Naive thymus-derived CD4-positive, alpha-beta T cell (primary cell): ENCODE measurements at regions of chr14 and their contacts with region 1.

Region 1: DNA sequence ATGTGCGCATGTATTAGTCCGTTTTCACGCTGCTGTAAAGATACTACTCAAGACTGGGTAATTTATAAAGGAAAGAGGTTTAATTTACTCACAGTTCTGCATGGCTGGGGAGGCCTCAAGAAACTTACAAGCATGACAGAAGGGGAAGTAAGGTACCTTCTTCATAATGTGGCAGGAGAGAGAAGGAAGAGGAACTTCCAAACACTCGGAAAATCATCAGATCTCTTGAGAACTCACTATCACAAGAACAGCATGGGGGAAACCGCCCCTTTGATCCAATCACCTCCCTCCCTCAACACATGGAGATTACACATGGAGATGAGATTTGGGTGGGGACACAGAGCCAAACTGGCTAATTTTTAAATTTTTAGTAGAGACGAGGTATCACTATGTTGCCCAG is 41.8 kb upstream of the SNX6 start:
- DNase-seq: no peak
- ATAC-seq: no peak
- H3K4me3 ChIP-seq: no peak overlapping the region
- H3K4me3 Mint-ChIP-seq: no peak overlapping the region
- H3K27ac ChIP-seq: no peak overlapping the region
- H3K27ac Mint-ChIP-seq: no peak overlapping the region
- H3K4me1 ChIP-seq: no peaks in the 10 kb centered on the region
- H3K4me1 Mint-ChIP-seq: peaks cover 0 to 1% (median 0%) of the 10 kb centered on the region in 7 donors
- H3K27me3 ChIP-seq: no peaks in the 10 kb centered on the region
- H3K27me3 Mint-ChIP-seq: peaks cover 0 to 2% (median 0%) of the 10 kb centered on the region in 5 donors

Region 2: DNA sequence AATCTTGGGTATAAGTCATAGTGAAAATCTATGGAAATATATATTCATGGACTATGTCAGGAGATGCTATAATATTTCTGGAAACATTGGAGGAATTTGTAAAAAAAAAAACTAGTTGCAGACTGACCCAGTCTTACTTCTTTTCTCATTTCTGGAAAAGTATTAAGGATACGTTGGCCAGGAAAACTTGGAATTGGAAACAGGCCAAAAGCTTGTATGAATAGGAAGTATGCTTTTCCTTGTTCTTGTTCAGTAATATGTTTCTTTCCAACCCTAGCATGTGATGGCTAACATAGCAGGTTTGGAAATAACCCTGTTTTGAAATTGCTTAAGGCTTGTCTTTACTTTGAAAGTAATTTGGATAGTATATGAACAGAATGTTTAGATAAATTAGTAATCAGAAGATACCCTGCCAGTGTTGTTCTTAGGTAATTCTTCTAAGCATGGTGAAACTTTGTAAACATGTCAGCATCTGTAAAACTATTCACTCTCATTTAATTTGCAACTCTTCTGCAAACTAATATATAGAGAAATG is 1416.8 kb before region 1 on chr14:
- CTCF ChIA-PET with region 1: no interaction called
- POLR2A ChIA-PET with region 1: no interaction called
- intact Hi-C with region 1: no loop called
- DNase-seq: no peak
- ATAC-seq: no peak
- H3K4me3 ChIP-seq: no peak overlapping the region
- H3K4me3 Mint-ChIP-seq: no peak overlapping the region
- H3K27ac ChIP-seq: no peak overlapping the region
- H3K27ac Mint-ChIP-seq: no peak overlapping the region
- H3K4me1 ChIP-seq: no peaks in the 10 kb centered on the region
- H3K4me1 Mint-ChIP-seq: no peaks in the 10 kb centered on the region
- H3K27me3 ChIP-seq: no peaks in the 10 kb centered on the region
- H3K27me3 Mint-ChIP-seq: peaks cover 0 to 6% (median 0%) of the 10 kb centered on the region in 5 donors

Region 3: DNA sequence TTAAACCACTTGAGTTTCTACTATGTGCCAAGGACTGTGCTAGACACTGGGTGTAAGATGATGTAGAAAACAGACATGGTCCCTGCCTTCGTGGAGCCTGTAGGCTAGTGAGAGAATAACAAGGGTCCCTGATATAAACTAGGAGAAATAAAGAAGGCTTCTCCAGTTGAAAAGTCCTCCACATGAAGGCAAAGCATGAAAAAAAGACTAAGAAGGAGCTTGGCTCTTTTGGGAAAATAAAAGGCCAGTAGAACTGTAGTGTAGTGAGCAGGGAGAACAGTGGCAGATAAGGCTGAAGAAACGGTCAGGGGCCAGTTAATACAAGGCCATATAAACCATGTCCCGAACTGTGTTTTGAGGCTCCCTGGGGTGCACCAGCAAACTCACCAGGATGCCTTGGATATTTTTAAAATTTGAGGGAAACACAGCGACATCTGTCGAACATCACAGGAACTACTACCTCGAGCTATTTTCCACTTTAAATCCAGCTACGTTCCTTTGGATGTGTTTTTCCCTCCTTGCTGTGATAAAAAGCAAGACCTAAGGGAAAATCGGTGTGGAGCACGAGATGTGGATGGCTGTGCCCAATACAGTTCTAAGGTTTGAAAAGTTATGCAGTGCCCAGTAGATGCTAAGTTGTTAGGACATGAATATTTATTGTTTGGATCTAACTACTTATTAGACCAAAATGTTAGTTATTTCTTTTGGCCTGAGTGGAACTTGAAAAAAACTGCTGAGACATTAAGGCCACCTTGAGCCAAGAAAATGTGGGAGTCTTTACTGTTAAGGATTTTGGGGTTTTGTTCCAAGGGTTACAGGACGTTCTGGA is 51.2 kb after region 1 on chr14:
- CTCF ChIA-PET with region 1: interaction called, 42 read pairs
- POLR2A ChIA-PET with region 1: interaction called, 4 read pairs
- intact Hi-C with region 1: loop called (anchors 1 kb)
- DNase-seq: peak in 6 of 9 donors; percentile 21 to 54 (median 32)
- ATAC-seq: peak; percentile 66
- H3K4me3 ChIP-seq: no peak overlapping the region
- H3K4me3 Mint-ChIP-seq: no peak overlapping the region
- H3K27ac ChIP-seq: no peak overlapping the region
- H3K27ac Mint-ChIP-seq: peak overlapping the region in 1 of 9 donors; percentile 8
- H3K4me1 ChIP-seq: no peaks in the 10 kb centered on the region
- H3K4me1 Mint-ChIP-seq: peaks cover 0 to 10% (median 0%) of the 10 kb centered on the region in 7 donors
- H3K27me3 ChIP-seq: no peaks in the 10 kb centered on the region
- H3K27me3 Mint-ChIP-seq: peaks cover 0 to 24% (median 0%) of the 10 kb centered on the region in 5 donors

Region 4: GRCh38 chr14:34912178-34912577 is 240.5 kb after region 1 on chr14:
- CTCF ChIA-PET with region 1: no interaction called
- POLR2A ChIA-PET with region 1: no interaction called
- intact Hi-C with region 1: loop called in 1 of 2 experiments (anchors 5 kb)
- DNase-seq: no peak
- ATAC-seq: no peak
- H3K4me3 ChIP-seq: no peak overlapping the region
- H3K4me3 Mint-ChIP-seq: no peak overlapping the region
- H3K27ac ChIP-seq: no peak overlapping the region
- H3K27ac Mint-ChIP-seq: peak overlapping the region in 5 of 9 donors; percentile 2 to 71 (median 16)
- H3K4me1 ChIP-seq: no peaks in the 10 kb centered on the region
- H3K4me1 Mint-ChIP-seq: peaks cover 0 to 10% (median 0%) of the 10 kb centered on the region in 7 donors
- H3K27me3 ChIP-seq: no peaks in the 10 kb centered on the region
- H3K27me3 Mint-ChIP-seq: no peaks in the 10 kb centered on the region